Calu3 (cell line): ENCODE measurements at regions of chr1 and their contacts with region 1.

Region 1: DNA sequence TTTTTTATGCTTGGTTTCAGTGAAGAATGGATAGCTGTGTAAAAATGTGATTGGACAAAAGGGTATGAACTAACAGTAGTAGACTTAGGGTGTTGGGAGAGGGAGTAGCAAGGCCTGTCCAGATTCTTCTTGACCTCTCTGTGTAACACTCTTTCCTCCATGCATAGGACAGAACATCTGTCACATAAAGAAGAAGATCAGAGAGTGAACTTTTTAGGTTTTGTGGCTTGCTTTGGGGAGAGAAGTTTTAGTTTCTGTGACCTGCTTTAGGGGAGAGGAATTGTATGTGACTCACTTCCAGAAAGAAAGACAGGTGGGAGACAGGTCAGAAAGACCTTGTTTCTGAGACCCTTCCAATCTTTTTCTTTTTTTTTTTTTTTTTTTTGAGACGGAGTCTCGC is 27.3 kb upstream of the LRRC52 start:
- DNase-seq: no peak
- H3K4me3 Mint-ChIP-seq: no peak overlapping the region
- H3K27ac Mint-ChIP-seq: no peak overlapping the region
- H3K4me1 Mint-ChIP-seq: no peaks in the 10 kb centered on the region
- H3K27me3 Mint-ChIP-seq: peaks cover 82% of the 10 kb centered on the region
- CTCF ChIP-seq: no peak

Region 2: GRCh38 chr1:165279882-165280281 is 236.6 kb before region 1 on chr1:
- CTCF ChIA-PET with region 1: no interaction called
- intact Hi-C with region 1: no loop called
- DNase-seq: no peak
- H3K4me3 Mint-ChIP-seq: no peak overlapping the region
- H3K27ac Mint-ChIP-seq: no peak overlapping the region
- H3K4me1 Mint-ChIP-seq: no peaks in the 10 kb centered on the region
- H3K27me3 Mint-ChIP-seq: peaks cover 84% of the 10 kb centered on the region
- CTCF ChIP-seq: no peak

Region 3: DNA sequence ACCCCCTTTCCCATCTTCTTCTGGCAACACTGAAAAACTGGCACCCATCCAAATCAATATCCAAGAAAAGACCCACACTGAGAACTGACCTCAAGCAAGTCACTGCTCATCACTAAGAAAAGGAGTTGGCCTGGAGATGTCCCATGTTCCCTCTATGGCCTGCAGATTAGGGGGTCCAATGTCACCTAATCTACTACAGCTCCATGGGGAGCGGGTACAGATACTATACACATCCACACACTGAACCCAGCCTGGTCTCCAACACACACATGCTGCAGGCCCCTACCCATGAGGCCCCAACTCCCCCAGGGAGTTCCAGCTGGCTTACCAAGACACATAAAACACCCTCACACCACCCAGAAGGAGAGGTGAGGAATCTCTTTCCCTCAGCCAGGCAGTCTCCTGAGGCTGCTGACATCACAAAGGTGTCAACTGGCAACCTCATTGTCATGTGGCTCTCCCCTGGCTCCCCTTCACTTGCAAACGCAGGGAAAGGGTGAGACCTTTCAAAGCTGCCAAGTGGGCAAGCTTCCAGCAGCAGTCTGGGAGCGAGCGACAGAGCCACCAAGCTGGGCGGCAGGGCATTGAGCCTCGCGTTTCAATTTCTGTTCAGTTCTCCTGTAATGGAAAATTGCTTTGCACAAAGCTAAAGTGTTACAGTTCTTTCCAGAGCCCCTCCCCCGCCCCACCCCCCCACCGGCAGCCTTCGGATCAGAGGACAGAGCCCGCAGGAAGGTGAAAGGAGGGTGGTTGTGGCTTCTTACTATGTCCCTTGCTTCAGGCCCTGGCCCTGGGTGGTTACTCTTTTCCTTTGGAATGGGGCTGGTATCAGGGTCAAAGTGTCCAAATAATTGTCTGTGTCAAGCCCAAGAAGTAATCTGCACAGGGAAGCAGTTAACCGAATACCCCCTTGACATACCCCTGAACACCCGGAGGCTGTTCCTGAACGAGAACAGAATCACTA is 27.3 kb after region 1 on chr1 and contains the start of gene LRRC52:
- CTCF ChIA-PET with region 1: no interaction called
- intact Hi-C with region 1: loop called (anchors 2 kb)
- DNase-seq: peak; percentile 44
- H3K4me3 Mint-ChIP-seq: no peak within 1 kb of the TSS
- H3K27ac Mint-ChIP-seq: peak within 1 kb of the TSS; percentile 36
- H3K4me1 Mint-ChIP-seq: peaks cover 14% of the 10 kb centered on the region
- H3K27me3 Mint-ChIP-seq: peaks cover 55% of the 10 kb centered on the region
- CTCF ChIP-seq: no peak
- total RNA-seq, gene LRRC52: not detected in 2 replicates

Region 4: DNA sequence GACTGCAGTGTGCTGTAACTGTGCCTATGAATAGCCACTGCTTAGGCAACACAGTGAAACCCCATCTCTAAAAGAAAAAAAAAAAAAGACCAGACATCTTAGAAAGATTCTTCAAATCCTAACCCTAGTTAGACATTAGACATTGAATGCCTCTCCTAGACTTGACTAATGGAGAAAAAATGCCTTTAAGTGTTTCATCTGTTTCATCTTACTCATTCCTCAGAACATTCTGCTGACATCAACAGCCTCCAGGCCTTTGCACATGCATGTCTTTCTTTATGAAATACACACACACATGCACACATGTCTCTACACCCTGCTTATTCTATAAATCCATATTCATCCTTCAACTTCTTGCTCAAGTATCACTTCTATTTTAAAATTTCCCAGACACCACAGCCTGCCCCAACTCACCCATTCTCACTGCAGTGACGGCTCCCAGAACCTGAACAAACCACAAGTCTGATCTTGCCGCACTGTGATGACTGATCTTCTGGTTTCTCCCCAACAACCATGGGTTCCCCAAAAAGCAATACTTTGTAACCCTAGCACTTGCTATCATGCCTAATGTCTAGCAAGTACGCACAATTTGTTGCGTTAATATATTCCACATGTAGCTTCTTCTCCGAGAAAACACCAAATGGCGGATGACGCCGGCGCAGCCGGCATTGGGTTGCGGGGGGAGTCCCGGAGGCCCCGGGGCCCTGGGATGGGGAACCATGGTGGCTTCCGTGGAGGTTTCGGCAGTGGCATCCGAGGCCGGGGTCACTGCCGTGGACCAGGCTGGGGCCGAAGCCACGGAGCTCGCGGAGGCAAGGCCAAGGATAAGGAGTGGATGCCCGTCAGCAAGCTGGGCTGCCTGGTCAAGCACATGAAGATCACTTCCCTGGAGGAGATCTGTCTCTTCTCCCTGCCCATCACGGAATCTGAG is 64.7 kb after region 1 on chr1:
- CTCF ChIA-PET with region 1: no interaction called
- intact Hi-C with region 1: no loop called
- DNase-seq: no peak
- H3K4me3 Mint-ChIP-seq: no peak overlapping the region
- H3K27ac Mint-ChIP-seq: no peak overlapping the region
- H3K4me1 Mint-ChIP-seq: no peaks in the 10 kb centered on the region
- H3K27me3 Mint-ChIP-seq: peaks cover 51% of the 10 kb centered on the region
- CTCF ChIP-seq: no peak